Gastrocnemius medialis (tissue), 4 donors: ENCODE measurements at regions of chr14 and their contacts with region 1.

Region 1: GRCh38 chr14:102362545-102363181 is at the starts of genes CINP and TECPR2:
- DNase-seq: peak; percentile 97 to 98
- ATAC-seq: peak; percentile 91 to 93
- H3K4me3 ChIP-seq: peak within 1 kb of the TSS; percentile 70 to 97 (median 86)
- H3K27ac ChIP-seq: peak within 1 kb of the TSS; percentile 88 to 99 (median 97)
- H3K4me1 ChIP-seq: peaks cover 24 to 32% of the 10 kb centered on the region in 2 donors
- H3K27me3 ChIP-seq: no peaks in the 10 kb centered on the region
- CTCF ChIP-seq: no peak
- POLR2A ChIP-seq: peak; percentile 90 to 94
- total RNA-seq, gene CINP: 19.2 to 25.1 (median 21.5) TPM
- total RNA-seq, gene TECPR2: 10.0 to 45.0 (median 20.2) TPM

Region 2: GRCh38 chr14:102408724-102409123 is 46.1 kb after region 1 on chr14:
- in situ Hi-C with region 1: no loop called
- intact Hi-C with region 1: loop called (anchors 2 kb)
- DNase-seq: peak; percentile 52 to 77
- ATAC-seq: peak; percentile 59 to 67
- H3K4me3 ChIP-seq: no peak overlapping the region
- H3K27ac ChIP-seq: peak overlapping the region; percentile 86 to 96 (median 90)
- H3K4me1 ChIP-seq: peaks cover 32 to 42% of the 10 kb centered on the region in 2 donors
- H3K27me3 ChIP-seq: no peaks in the 10 kb centered on the region
- CTCF ChIP-seq: no peak
- POLR2A ChIP-seq: no peak

Region 3: GRCh38 chr14:102516531-102517415 is 154.1 kb after region 1 on chr14:
- in situ Hi-C with region 1: no loop called
- intact Hi-C with region 1: loop called (anchors 5 kb)
- DNase-seq: peak in 1 of 2 donors; percentile 48
- ATAC-seq: peak; percentile 75 to 79
- H3K4me3 ChIP-seq: peak overlapping the region; percentile 53 to 78 (median 66)
- H3K27ac ChIP-seq: peak overlapping the region; percentile 17 to 69 (median 62)
- H3K4me1 ChIP-seq: peaks cover 0 to 5% of the 10 kb centered on the region in 2 donors
- H3K27me3 ChIP-seq: no peaks in the 10 kb centered on the region
- CTCF ChIP-seq: peak; percentile 74 to 100 (median 100)
- POLR2A ChIP-seq: no peak